ENCODE measurements at regions of chr18 and their contacts with region 1.

Region 1: DNA sequence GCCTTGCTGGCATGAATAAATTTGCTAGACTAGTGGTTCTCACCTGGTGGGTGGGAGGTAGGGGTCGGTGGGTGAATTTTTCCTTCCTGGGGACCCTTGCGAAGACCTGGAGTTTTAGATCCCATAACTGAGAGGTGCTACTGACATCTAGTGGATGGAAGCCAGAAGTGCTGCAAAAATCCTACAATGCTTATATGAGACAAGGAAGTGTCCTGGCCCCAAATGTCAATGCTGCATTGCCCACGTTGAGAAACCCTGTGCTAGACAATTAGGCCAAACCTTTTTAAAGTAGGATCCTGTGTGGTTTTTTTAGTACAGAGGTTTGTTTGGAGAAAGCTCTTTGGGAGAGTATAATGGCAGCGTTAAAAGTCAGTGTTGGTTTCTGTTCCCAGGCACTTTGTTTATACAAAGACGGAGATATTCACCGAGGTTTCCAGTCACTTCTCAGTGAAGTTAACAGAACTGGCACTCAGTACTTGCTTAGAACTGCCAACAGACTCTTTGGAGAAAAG is 9.6 kb downstream of the SERPINB8 start:
- DNase-seq: peak; percentile 58
- H3K4me3 Mint-ChIP-seq: no peak overlapping the region
- H3K27ac Mint-ChIP-seq: no peak overlapping the region
- H3K4me1 Mint-ChIP-seq: peaks cover 16% of the 10 kb centered on the region
- H3K27me3 Mint-ChIP-seq: no peaks in the 10 kb centered on the region

Region 2: DNA sequence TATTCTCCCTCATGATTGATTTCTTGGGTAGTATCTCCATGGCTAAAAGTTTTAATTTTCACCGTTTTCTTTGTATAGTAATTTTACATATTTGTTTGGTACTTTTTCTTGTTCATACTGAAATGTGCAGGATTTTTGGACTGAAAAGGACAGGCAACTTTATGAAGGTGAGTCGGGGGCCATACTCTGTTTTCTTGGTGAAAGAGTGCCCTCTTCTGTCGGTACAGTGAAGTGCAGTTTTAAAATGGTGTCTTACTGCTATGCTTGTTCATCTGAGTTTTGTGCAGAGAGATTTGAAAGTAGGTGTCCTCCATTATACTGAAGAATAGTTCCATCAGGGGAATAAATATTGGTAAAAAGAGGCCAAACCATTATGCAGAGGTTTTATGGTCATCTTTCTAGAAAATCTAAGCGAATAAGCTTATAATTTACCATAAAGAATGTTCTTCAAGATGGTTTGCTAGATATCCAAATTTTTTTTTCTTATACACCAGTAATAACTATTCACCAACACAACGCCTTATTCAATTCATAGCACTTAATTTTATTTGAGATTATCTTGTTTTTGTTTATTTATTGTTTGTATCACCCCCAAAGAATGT is 401.0 kb before region 1 on chr18:
- CTCF ChIA-PET with region 1: no interaction called
- intact Hi-C with region 1: loop called (anchors 1 kb)
- DNase-seq: peak; percentile 28
- H3K4me3 Mint-ChIP-seq: no peak overlapping the region
- H3K27ac Mint-ChIP-seq: no peak overlapping the region
- H3K4me1 Mint-ChIP-seq: no peaks in the 10 kb centered on the region
- H3K27me3 Mint-ChIP-seq: peaks cover 10% of the 10 kb centered on the region

Region 3: GRCh38 chr18:63848159-63848558 is 131.3 kb before region 1 on chr18:
- CTCF ChIA-PET with region 1: no interaction called
- intact Hi-C with region 1: loop called (anchors 2 kb)
- DNase-seq: no peak
- H3K4me3 Mint-ChIP-seq: no peak overlapping the region
- H3K27ac Mint-ChIP-seq: no peak overlapping the region
- H3K4me1 Mint-ChIP-seq: no peaks in the 10 kb centered on the region
- H3K27me3 Mint-ChIP-seq: peaks cover 14% of the 10 kb centered on the region

Region 4: DNA sequence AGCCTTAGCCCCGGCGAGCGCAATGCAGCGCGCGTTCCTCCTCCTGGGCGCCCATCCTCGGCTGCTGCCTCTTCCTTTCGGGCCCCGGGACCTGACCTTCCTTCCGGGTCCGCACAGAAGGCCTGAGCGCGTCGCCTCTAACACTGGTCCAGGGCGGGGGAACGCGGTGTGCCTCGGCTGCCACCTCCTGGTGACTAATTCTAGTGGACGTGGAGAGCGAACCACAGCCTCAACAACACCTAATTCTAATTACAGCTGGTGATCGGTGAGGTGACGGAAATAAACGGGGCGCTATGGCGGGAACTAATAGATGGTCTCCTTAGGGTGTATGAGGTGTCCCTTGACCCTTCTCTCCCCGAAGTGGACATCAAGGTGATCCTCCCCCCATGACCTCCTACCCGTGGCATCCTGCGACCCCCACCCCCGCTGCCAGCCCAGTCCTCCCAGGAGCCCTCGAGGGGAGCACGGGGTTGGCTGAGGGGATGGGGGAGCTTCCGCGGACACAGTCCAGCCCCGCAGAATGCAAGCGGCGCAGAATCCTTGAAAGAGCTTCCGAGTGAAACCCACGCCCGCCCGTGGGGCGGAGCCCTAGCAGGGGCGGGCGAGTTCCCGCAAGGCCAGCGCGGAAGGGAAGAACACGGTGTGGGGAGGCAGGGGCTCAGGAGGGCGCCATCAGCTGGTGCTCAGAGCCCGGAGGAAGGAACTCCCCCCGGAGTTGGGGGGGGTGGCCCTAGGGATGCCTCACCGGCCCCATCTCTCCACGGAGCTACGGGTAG is 43.1 kb before region 1 on chr18:
- CTCF ChIA-PET with region 1: interaction called, 17 read pairs
- intact Hi-C with region 1: loop called (anchors 1 kb)
- DNase-seq: peak; percentile 77
- H3K4me3 Mint-ChIP-seq: no peak overlapping the region
- H3K27ac Mint-ChIP-seq: no peak overlapping the region
- H3K4me1 Mint-ChIP-seq: peaks cover 2% of the 10 kb centered on the region
- H3K27me3 Mint-ChIP-seq: peaks cover 13% of the 10 kb centered on the region

Region 5: DNA sequence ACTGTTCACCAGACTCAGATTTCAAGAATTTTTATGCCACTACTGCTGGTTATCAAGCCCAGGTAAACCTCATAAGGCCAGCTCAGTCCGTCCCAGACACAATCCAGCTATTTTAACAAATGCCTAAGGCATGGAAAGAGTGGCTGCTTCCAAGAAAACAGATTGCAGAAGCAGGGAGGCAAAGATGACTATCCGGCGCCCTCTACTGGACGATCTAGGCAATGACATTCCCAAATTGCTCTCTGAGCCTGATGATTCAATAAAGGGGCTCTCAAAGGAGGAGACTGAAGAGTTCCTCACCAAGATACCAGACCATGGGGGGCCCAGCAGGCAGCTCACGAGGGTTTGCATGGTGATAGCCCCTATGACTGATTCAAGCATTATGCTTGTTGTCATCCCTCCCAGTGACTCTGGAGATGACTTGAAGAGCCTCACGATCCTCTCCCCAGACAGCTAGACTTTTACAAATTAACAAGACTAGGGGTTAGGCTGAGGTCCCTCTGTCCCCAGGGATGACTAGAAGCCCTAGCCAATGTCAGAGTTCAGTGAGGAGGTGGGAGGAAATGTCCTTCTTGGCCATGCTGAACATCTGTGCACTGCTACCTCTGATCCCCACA is 15.4 kb after region 1 on chr18:
- CTCF ChIA-PET with region 1: interaction called, 11 read pairs
- intact Hi-C with region 1: no loop called
- DNase-seq: peak; percentile 61
- H3K4me3 Mint-ChIP-seq: no peak overlapping the region
- H3K27ac Mint-ChIP-seq: no peak overlapping the region
- H3K4me1 Mint-ChIP-seq: peaks cover 5% of the 10 kb centered on the region
- H3K27me3 Mint-ChIP-seq: no peaks in the 10 kb centered on the region

Region 6: GRCh38 chr18:64017870-64018269 is 38.4 kb after region 1 on chr18:
- CTCF ChIA-PET with region 1: no interaction called
- intact Hi-C with region 1: no loop called
- DNase-seq: no peak
- H3K4me3 Mint-ChIP-seq: no peak overlapping the region
- H3K27ac Mint-ChIP-seq: no peak overlapping the region
- H3K4me1 Mint-ChIP-seq: peaks cover 5% of the 10 kb centered on the region
- H3K27me3 Mint-ChIP-seq: no peaks in the 10 kb centered on the region

Measured in activated naive CD4-positive, alpha-beta T cell treated with anti-CD3 and anti-CD28 coated beads for 36 hours (primary cell).